Psoas muscle (tissue), 8 donors: ENCODE measurements at regions of chr1 and their contacts with region 1.

Region 1: DNA sequence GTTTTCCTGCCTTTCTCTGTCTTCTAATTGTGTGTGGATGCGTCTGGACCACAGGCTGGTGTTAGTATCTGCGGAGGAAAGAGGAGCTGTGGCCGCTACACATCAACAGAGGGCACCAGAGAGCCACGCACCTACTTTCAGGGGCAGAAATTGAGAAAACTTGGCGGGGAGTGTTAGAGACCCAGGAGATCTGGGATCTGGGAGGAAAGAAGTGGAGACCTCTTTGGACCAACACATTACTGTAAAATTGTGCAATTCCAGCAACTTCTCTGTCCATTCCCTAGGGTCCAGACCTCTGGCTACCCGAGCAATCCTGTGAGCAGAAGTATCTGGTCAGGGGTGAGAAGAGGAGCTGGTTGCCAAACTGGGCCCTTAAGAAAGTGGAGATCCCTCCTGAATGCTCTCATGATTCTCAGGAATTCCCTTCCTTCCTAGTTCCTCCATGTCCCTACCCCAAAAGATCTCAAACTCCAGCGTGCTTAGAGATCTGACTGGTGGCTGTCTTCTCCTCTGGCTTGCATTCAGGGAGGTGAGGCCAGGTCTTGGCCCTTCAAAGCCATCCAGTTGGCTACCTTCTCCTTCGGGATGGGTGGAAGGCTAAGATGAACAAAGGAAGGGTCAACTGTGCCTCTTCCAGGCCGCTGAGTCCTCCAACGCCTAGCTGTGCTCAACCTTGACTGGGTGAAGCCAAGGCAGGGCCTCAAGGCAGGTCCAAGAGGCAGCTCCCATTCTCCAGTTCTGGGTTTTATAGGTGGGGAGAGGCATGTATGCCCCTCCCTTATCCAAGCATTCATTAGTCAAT is 1.2 kb upstream of the KIRREL1 start:
- DNase-seq: peak; percentile 65 to 82
- ATAC-seq: peak; percentile 68 to 82 (median 77)
- H3K4me3 ChIP-seq: no peak overlapping the region
- H3K27ac ChIP-seq: peak overlapping the region; percentile 53
- H3K4me1 ChIP-seq: no peaks in the 10 kb centered on the region
- H3K27me3 ChIP-seq: peaks cover 0 to 42% (median 16%) of the 10 kb centered on the region in 3 donors
- CTCF ChIP-seq: peak; percentile 85

Region 2: GRCh38 chr1:158007667-158008386 is 15.6 kb after region 1 on chr1:
- intact Hi-C with region 1: loop called in 1 of 2 experiments (anchors 2 kb)
- DNase-seq: no peak
- ATAC-seq: no peak
- H3K4me3 ChIP-seq: no peak overlapping the region
- H3K27ac ChIP-seq: peak overlapping the region; percentile 50
- H3K4me1 ChIP-seq: peaks cover 13% of the 10 kb centered on the region
- H3K27me3 ChIP-seq: peaks cover 0 to 6% (median 0%) of the 10 kb centered on the region in 3 donors
- CTCF ChIP-seq: no peak

Region 3: DNA sequence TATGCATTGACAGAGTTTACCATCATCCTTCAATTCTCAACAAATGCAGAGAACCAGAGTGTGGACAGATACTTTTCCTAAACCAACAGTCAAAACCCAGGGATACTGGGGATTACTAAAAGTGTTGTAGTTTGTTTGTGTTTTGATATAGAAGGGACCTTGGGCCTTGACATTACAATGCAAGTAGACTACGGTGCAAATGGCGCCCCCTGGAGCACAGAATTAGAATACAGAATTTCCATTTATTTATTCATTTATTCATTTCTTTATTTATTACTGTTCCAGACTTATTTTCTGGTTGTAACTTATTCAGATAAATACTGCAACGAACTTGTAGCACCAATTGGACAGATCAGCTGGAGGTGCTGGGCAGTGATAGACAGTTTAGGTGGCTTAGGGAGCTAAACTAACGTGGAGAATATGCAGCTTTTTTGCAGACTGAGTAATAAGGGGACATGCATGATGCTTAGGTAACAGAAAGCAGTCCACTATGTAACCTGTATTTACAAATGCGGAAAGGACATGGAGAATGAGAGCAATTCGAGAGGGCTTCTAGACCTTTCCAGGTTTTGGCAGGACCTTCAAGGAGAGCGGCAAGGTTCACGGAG is 43.8 kb after region 1 on chr1:
- intact Hi-C with region 1: loop called in 1 of 2 experiments (anchors 2 kb)
- DNase-seq: no peak
- ATAC-seq: no peak
- H3K4me3 ChIP-seq: no peak overlapping the region
- H3K27ac ChIP-seq: no peak overlapping the region
- H3K4me1 ChIP-seq: no peaks in the 10 kb centered on the region
- H3K27me3 ChIP-seq: peaks cover 0 to 3% (median 0%) of the 10 kb centered on the region in 3 donors
- CTCF ChIP-seq: peak; percentile 48

Region 4: GRCh38 chr1:158045639-158046038 is 53.4 kb after region 1 on chr1:
- intact Hi-C with region 1: loop called in 1 of 2 experiments (anchors 2 kb)
- DNase-seq: no peak
- ATAC-seq: no peak
- H3K4me3 ChIP-seq: no peak overlapping the region
- H3K27ac ChIP-seq: no peak overlapping the region
- H3K4me1 ChIP-seq: no peaks in the 10 kb centered on the region
- H3K27me3 ChIP-seq: peaks cover 0 to 10% (median 2%) of the 10 kb centered on the region in 3 donors
- CTCF ChIP-seq: no peak

Region 5: DNA sequence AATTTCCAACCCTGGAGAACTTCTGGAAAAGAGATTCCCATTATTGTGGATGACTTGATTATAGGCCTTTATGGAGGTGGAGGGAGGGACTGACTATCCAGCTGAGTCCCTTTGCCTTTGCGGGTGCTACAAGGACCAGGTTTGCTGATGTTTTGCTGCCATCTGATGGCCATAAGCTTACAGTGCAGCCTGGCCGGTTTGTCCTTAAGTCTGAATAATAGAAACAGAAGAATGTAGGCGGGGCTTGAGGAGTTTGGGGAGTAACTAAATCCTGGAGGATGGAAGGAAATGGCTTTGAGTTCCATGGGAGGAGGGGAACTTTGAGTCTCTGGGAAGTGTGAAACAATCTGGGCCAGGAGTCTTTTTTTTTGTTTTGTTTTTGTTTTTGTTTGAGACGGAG is 132.8 kb after region 1 on chr1:
- intact Hi-C with region 1: loop called (anchors 2 to 5 kb)
- DNase-seq: peak; percentile 78 to 87
- ATAC-seq: peak; percentile 88 to 98 (median 94)
- H3K4me3 ChIP-seq: no peak overlapping the region
- H3K27ac ChIP-seq: no peak overlapping the region
- H3K4me1 ChIP-seq: no peaks in the 10 kb centered on the region
- H3K27me3 ChIP-seq: peaks cover 0 to 14% (median 0%) of the 10 kb centered on the region in 3 donors
- CTCF ChIP-seq: peak; percentile 90

Region 6: GRCh38 chr1:158248118-158248517 is 255.9 kb after region 1 on chr1:
- intact Hi-C with region 1: no loop called
- DNase-seq: no peak
- ATAC-seq: no peak
- H3K4me3 ChIP-seq: no peak overlapping the region
- H3K27ac ChIP-seq: no peak overlapping the region
- H3K4me1 ChIP-seq: no peaks in the 10 kb centered on the region
- H3K27me3 ChIP-seq: peaks cover 0 to 4% (median 3%) of the 10 kb centered on the region in 3 donors
- CTCF ChIP-seq: no peak